CD4-positive, alpha-beta T cell (primary cell): ENCODE measurements at regions of chr1 and their contacts with region 1.

Region 1: DNA sequence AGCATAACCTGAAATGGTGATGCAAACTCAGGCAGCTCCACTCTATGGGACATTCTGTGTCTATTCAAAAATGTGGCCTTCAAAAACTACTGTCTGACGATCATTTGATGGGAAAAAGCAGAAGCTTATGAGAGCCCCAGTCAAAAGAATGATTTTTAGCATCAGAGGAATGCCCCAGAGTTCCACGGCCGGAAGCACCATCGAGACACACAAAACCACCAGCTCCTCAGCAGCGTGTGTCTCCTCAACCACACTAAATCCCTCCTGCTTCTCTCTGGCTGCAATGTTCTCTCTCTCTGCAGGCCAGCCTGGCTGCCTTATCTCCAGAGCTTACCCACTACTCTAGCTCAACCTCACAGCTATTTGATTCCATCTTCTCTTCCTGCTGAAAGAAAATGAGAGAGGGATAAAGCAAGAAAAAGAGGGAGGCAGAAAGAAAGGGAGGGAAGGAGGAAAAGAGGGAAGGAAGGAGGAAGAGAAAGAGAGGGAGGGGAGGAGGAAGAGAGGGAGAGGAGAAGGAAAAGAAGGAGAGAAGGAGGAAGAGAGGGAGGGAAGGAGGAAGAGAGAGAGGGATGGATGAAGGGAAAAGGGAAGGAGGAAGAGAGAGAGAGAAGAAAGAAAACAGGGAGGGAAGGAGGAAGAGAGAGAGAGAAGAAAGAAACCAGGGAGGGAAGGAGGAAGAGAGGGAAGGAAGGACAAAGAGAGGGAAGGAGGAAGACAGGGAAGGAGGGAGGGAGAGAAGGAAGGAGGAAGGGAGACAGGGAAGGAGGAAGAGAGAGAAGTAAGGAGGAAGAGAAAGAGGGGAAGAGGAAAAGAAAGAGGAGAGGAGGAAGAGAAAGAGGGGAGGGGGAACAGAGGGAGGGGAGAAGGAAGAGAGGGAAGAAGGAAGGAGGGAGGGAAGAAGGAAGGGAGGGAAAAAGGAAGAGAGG is 33.5 kb upstream of the LAPTM5 start:
- DNase-seq: peak in 6 of 14 experiments; percentile 12 to 70 (median 28)
- ATAC-seq: peak; percentile 68
- H3K4me3 ChIP-seq: no peak overlapping the region
- H3K4me3 Mint-ChIP-seq: no peak overlapping the region
- H3K27ac ChIP-seq: no peak overlapping the region
- H3K27ac Mint-ChIP-seq: no peak overlapping the region
- H3K4me1 ChIP-seq: peaks cover 12% of the 10 kb centered on the region
- H3K4me1 Mint-ChIP-seq: peaks cover 11% of the 10 kb centered on the region
- H3K27me3 ChIP-seq: peaks cover 3 to 4% of the 10 kb centered on the region in 2 experiments
- H3K27me3 Mint-ChIP-seq: peaks cover 18% of the 10 kb centered on the region
- CTCF ChIP-seq: no peak

Region 2: DNA sequence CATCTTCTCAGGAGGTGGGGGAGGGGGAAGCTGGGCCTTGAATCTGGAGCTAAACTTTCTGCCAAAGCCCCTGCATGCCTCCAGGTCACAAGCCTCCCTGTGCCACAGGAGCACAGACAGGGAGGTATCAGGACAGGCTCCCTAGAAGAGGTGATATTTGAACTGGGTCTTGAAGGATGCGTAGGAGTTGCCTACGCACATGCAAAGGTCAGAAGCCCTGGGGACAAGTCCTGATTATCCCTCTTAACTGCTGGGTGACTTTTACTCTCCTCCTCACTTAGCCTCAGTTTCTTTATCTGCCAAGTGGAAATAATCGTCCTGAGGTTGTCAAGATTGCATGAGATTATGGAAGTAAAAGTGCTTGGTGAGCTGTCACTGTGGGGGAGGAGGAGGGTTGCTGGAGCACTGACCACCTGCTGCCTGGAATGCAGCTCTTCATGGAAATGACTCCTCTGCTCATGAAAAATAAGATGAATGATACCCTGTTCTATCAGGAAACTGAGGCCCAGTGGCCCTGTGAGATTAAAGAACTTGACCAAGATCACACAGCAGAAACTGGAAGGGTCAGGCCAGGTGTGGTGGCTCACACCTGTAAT is 17.1 kb after region 1 on chr1:
- CTCF ChIA-PET with region 1: no interaction called
- POLR2A ChIA-PET with region 1: no interaction called
- intact Hi-C with region 1: no loop called
- DNase-seq: no peak
- ATAC-seq: no peak
- H3K4me3 ChIP-seq: no peak overlapping the region
- H3K4me3 Mint-ChIP-seq: no peak overlapping the region
- H3K27ac ChIP-seq: no peak overlapping the region
- H3K27ac Mint-ChIP-seq: no peak overlapping the region
- H3K4me1 ChIP-seq: no peaks in the 10 kb centered on the region
- H3K4me1 Mint-ChIP-seq: no peaks in the 10 kb centered on the region
- H3K27me3 ChIP-seq: peaks cover 25 to 29% of the 10 kb centered on the region in 2 experiments
- H3K27me3 Mint-ChIP-seq: peaks cover 69% of the 10 kb centered on the region
- CTCF ChIP-seq: no peak

Region 3: GRCh38 chr1:31310198-31310597 is 519.1 kb after region 1 on chr1:
- CTCF ChIA-PET with region 1: no interaction called
- POLR2A ChIA-PET with region 1: no interaction called
- intact Hi-C with region 1: loop called in 1 of 2 experiments (anchors 10 kb)
- DNase-seq: no peak
- ATAC-seq: no peak
- H3K4me3 ChIP-seq: no peak overlapping the region
- H3K4me3 Mint-ChIP-seq: no peak overlapping the region
- H3K27ac ChIP-seq: no peak overlapping the region
- H3K27ac Mint-ChIP-seq: no peak overlapping the region
- H3K4me1 ChIP-seq: no peaks in the 10 kb centered on the region
- H3K4me1 Mint-ChIP-seq: peaks cover 17% of the 10 kb centered on the region
- H3K27me3 ChIP-seq: no peaks in the 10 kb centered on the region
- H3K27me3 Mint-ChIP-seq: no peaks in the 10 kb centered on the region
- CTCF ChIP-seq: no peak